Activated CD4-positive, alpha-beta T cell treated with anti-CD3 and anti-CD28 coated beads for 36 hours (primary cell): ENCODE measurements at regions of chr19 and their contacts with region 1.

Region 1: GRCh38 chr19:43080186-43080585 is 2.3 kb downstream of the PSG2 start:
- DNase-seq: no peak
- ATAC-seq: no peak
- H3K4me3 Mint-ChIP-seq: no peak overlapping the region
- H3K27ac Mint-ChIP-seq: no peak overlapping the region
- H3K4me1 Mint-ChIP-seq: no peaks in the 10 kb centered on the region
- H3K27me3 Mint-ChIP-seq: no peaks in the 10 kb centered on the region

Region 2: DNA sequence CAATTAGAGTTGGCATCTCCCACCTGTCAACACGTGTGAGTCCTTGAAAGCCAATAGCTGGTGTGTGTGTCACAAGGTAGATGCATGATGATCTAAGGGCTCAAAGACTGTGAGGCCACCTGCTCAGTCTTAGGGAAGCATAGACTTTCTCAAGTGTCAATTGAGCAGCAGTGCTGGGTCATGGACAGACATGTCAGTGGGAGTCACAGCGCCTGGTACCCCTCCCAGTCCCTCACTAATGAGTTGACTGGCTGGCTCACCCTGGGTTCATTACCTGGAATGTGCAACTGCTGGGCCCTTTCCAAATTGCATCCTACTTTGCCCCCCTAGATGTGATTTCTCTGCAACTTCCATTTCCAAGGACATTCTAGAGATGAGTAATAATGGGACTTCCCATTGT is 153.4 kb before region 1 on chr19:
- CTCF ChIA-PET with region 1: no interaction called
- POLR2A ChIA-PET with region 1: no interaction called
- intact Hi-C with region 1: loop called in 1 of 2 experiments (anchors 5 kb)
- DNase-seq: no peak
- ATAC-seq: no peak
- H3K4me3 Mint-ChIP-seq: no peak overlapping the region
- H3K27ac Mint-ChIP-seq: no peak overlapping the region
- H3K4me1 Mint-ChIP-seq: no peaks in the 10 kb centered on the region
- H3K27me3 Mint-ChIP-seq: peaks cover 11% of the 10 kb centered on the region